K562 (cell line): ENCODE measurements at regions of chr22 and their contacts with region 1.

Region 1: DNA sequence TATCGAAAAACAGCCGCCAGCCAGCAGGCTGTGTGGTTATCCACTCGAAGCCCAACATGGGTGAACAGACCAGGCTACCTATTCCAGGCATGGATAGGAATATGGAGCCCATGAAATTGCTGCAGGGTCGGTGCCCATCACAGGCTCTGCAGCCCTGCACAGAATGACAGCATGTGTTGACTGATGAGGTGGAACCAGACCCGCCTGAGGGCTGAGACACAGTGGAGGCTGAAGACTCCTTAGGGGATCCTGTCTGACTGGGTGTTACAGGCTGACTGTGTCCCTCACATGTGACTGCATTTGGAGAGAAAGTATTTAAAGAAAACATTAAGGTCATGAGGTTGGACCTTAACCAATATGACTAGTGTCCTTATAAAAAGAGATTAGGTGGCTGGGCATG is 6.2 kb upstream of the YPEL1 start:
- DNase-seq: no peak
- ATAC-seq: peak; percentile 7; the same call in 2 of the 3 replicates
- H3K4me3 ChIP-seq: no peak overlapping the region
- H3K27ac ChIP-seq: no peak overlapping the region
- H3K4me1 ChIP-seq: peaks cover 7 to 13% of the 10 kb centered on the region in 2 experiments; a peak in 4 of 5 replicates
- H3K27me3 ChIP-seq: peaks cover 53 to 60% of the 10 kb centered on the region in 2 experiments
- CTCF ChIP-seq: no peak
- EP300 ChIP-seq: no peak
- POLR2A ChIP-seq: no peak
- RAD21 ChIP-seq: no peak

Region 2: DNA sequence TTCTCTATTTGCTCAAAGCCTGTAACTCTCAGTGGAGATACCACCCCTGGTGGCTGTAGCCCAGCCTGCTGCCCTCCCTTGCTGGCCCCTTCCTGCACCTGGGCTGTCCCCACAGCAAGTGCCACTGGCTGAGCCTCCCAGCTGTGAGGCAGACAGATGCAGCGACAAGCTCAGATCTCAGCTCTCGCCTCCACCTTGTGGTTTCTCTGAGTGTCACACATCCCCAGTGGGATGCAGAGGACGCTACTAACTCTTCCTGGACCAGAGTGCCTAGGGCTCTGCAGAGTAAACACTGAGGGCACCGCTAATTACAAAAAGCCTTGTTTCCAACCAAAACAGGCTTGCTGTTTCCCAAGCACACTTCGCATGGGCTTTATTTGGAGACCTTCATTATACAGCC is 15.2 kb before region 1 on chr22:
- CTCF ChIA-PET with region 1: no interaction called
- POLR2A ChIA-PET with region 1: interaction called, 11 read pairs
- in situ Hi-C with region 1: no loop called
- intact Hi-C with region 1: no loop called
- DNase-seq: peak; percentile 77 to 94 (median 86)
- ATAC-seq: peak; percentile 98
- H3K4me3 ChIP-seq: no peak overlapping the region
- H3K27ac ChIP-seq: no peak overlapping the region
- H3K4me1 ChIP-seq: peaks cover 0 to 13% of the 10 kb centered on the region in 2 experiments; a peak in 2 of 5 replicates
- H3K27me3 ChIP-seq: peaks cover 37 to 84% of the 10 kb centered on the region in 2 experiments
- CTCF ChIP-seq: peak in 2 of 3 experiments; percentile 99; a peak in 4 of 6 replicates
- EP300 ChIP-seq: no peak
- POLR2A ChIP-seq: no peak
- RAD21 ChIP-seq: peak in 1 of 2 experiments; percentile 97; a peak in 2 of 4 replicates

Region 3: GRCh38 chr22:21760640-21761039 is 18.8 kb after region 1 on chr22:
- CTCF ChIA-PET with region 1: no interaction called
- POLR2A ChIA-PET with region 1: interaction called, 43 read pairs
- in situ Hi-C with region 1: no loop called
- intact Hi-C with region 1: loop called (anchors 1 kb)
- DNase-seq: peak in 2 of 4 experiments; percentile 73 to 79
- ATAC-seq: peak; percentile 9; the same call in 1 of the 3 replicates
- H3K4me3 ChIP-seq: no peak overlapping the region
- H3K27ac ChIP-seq: no peak overlapping the region
- H3K4me1 ChIP-seq: peaks cover 17 to 21% of the 10 kb centered on the region in 2 experiments
- H3K27me3 ChIP-seq: no peaks in the 10 kb centered on the region
- CTCF ChIP-seq: no peak
- EP300 ChIP-seq: no peak
- POLR2A ChIP-seq: no peak
- RAD21 ChIP-seq: no peak